Sigmoid colon (tissue), 7 donors: ENCODE measurements at regions of chr9 and their contacts with region 1.

Region 1: DNA sequence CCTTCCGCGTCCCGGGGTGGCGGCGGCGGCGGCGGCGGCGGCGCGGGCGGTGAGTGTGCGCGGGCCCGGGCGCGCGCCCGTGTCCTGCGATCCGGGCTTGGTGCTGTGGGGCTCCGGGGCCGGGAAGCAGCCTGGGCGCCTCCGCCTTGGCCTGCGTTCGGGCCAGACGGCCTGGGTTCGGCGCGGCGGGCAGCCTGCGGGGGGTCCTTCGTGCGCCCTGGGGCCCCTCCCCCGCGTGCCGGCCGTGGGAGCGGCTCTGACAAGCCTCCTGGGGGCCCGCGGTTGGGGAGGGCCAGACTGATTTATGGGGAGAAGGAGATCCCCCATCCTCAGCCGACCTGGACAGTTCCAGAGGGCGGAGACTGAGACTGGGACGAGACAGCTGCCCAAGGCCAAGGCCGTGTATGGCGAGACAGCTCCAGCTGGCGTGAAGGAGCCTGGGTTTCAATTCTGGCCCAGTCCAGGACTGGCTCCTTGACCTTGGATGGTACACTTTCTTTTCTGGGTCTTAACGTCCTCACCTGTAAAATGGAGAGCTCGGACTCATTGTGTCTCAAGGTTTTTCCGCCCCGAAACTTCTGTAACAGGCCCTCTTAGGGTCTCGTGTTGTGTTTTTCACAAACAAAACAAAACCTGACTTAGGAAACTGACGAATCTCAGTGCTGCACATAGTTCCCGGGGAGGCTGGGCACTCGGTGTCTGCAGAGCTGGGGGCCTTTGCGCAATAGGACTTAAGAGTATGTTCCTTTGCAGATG is 603 bp downstream of the TMEM268 start:
- DNase-seq: peak; percentile 87
- H3K4me3 ChIP-seq: peak overlapping the region; percentile 60 to 71 (median 65)
- H3K27ac ChIP-seq: peak overlapping the region; percentile 92 to 97 (median 94)
- H3K4me1 ChIP-seq: peaks cover 0 to 33% (median 28%) of the 10 kb centered on the region in 4 donors
- H3K27me3 ChIP-seq: no peaks in the 10 kb centered on the region
- CTCF ChIP-seq: no peak
- EP300 ChIP-seq: peak in 1 of 4 donors; percentile 12
- POLR2A ChIP-seq: no peak

Region 2: DNA sequence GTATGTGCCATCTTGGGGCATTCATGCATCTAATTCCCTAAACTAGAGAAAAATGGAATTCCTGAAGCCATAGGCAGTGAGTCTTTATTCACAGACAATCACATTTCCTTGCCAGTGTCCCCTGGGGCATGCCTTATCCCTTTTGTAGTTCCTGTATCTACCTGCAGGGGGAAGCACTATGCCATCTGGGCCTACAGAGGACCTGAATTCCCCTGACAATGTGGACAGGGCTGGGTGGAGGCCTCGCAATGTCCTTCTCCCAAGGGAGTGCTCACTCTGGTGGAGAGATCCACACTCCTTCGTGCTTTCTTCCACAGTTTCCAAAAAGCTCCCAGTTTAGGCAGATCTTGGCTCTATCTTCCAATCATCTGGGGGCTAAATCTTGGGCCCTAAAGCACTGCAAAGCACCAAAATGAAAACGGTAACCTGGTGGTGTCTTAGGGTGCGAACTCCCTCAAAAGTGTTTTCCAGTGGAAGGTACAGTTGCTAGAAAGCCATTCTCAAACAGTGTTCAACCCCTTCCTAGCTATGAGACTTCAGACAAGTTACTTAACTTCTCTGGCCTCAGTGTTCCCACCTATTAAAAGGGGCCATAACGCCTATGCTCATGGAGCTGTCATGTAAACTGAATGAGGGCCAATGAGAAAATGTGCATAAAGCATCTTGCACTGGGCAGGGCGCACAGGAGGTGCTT is 123.9 kb before region 1 on chr9:
- intact Hi-C with region 1: loop called (anchors 1 kb)
- DNase-seq: peak; percentile 80
- H3K4me3 ChIP-seq: no peak overlapping the region
- H3K27ac ChIP-seq: no peak overlapping the region
- H3K4me1 ChIP-seq: peaks cover 0 to 15% (median 8%) of the 10 kb centered on the region in 4 donors
- H3K27me3 ChIP-seq: no peaks in the 10 kb centered on the region
- CTCF ChIP-seq: peak; percentile 80 to 90 (median 85)
- EP300 ChIP-seq: no peak
- POLR2A ChIP-seq: no peak

Region 3: GRCh38 chr9:114571391-114571790 is 40.3 kb before region 1 on chr9:
- intact Hi-C with region 1: no loop called
- DNase-seq: no peak
- H3K4me3 ChIP-seq: no peak overlapping the region
- H3K27ac ChIP-seq: no peak overlapping the region
- H3K4me1 ChIP-seq: no peaks in the 10 kb centered on the region
- H3K27me3 ChIP-seq: no peaks in the 10 kb centered on the region
- CTCF ChIP-seq: no peak
- EP300 ChIP-seq: no peak
- POLR2A ChIP-seq: no peak